ENCODE measurements at regions of chr5 and their contacts with region 1.

Region 1: GRCh38 chr5:120761986-120762385 is 297.9 kb downstream of the PRR16 start:
- DNase-seq: no peak
- ATAC-seq: no peak
- H3K4me3 ChIP-seq: no peak overlapping the region
- H3K27ac ChIP-seq: no peak overlapping the region
- H3K4me1 ChIP-seq: no peaks in the 10 kb centered on the region
- H3K27me3 ChIP-seq: no peaks in the 10 kb centered on the region
- CTCF ChIP-seq: no peak
- EP300 ChIP-seq: no peak
- POLR2A ChIP-seq: no peak
- RAD21 ChIP-seq: no peak

Region 2: DNA sequence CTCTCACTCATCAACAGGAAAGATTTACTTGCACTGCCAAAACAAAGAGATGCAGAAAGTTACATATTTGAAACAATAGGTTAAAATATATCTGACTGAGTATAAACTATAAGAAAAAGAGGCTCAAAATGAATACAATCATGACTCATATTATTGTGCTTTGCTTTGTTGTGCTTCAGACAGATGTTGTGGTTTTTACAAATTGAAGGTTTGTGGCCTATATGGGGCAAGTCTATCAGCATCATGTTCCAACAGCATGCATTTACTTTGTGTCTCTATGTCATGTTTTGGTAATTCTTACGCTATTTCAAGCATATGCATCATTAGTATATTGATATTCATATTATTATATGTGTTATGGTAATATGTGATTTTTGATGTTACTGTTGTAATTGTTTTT is 32.1 kb after region 1 on chr5:
- CTCF ChIA-PET with region 1: no interaction called
- POLR2A ChIA-PET with region 1: no interaction called
- in situ Hi-C with region 1: no loop called
- intact Hi-C with region 1: loop called (anchors 2 kb)
- DNase-seq: no peak
- ATAC-seq: no peak
- H3K4me3 ChIP-seq: no peak overlapping the region
- H3K27ac ChIP-seq: no peak overlapping the region
- H3K4me1 ChIP-seq: no peaks in the 10 kb centered on the region
- H3K27me3 ChIP-seq: no peaks in the 10 kb centered on the region
- CTCF ChIP-seq: no peak
- EP300 ChIP-seq: no peak
- POLR2A ChIP-seq: no peak
- RAD21 ChIP-seq: no peak